ENCODE measurements at regions of chr20 and their contacts with region 1.

Region 1: DNA sequence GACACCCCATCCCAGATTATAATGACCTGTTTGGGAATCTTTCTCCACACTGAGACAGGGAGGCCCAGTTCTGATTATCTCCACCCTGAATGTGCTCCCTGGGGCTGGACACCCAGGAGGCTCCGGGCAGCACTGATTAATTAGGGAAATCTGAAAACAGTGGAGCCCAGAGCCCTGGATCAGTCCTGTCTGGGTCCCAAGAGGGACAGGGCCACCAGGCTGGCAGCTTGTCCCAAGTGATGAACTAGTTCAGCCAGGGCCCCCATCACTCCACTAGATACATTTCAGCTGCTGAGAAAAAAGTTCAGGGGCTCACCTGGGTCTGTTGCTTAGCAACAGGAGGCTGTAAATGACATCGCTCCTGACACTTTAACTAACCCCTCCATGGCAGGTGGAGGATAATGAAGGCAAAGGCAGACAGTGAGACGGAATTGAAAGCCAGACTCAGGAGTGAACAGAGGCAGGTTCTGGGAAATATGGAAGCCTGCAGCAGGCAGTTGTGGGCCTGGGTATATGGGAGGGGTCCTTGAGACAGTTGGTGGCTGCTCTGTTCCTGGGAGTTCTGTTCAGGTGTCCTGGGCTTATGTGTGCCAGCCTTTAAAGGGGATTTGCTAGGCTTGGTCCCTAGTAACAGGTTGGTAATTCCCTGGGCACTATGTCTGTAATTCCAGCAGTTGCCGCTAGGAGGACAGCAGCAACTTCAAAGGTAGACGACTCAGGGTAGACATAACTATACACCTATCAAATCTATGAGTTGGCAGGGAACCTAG is 78.3 kb upstream of the CTNNBL1 start:
- DNase-seq: no peak
- ATAC-seq: peak in 1 of 4 donors; percentile 36
- H3K4me3 ChIP-seq: no peak overlapping the region
- H3K27ac ChIP-seq: no peak overlapping the region
- H3K4me1 ChIP-seq: no peaks in the 10 kb centered on the region
- H3K27me3 ChIP-seq: peaks cover 0 to 15% (median 0%) of the 10 kb centered on the region in 9 donors
- CTCF ChIP-seq: peak in 10 of 12 donors; percentile 20 to 77 (median 60)
- POLR2A ChIP-seq: no peak

Region 2: DNA sequence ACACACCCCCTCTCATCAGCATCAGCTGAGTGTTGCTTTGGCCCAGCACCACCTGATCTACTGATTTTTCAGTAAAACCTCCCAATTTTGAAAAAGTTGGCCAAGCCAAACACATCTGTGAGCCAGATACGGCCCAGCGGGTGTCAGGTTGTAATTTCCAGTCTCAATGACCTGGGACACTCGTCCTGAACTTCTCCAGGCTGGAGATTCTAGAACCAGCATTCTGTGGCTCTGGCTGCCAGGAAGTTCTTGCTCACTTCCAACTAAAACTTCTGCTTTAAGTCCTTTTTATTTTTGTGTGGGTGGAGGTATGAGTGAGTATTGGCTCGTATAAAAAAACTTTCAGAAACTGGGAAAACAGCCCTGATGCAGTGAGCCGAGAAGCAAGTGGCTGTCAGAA is 639.9 kb after region 1 on chr20:
- intact Hi-C with region 1: loop called in 1 of 10 experiments (anchors 10 kb)
- DNase-seq: peak in 1 of 5 donors; percentile 49
- ATAC-seq: peak in 3 of 4 donors; percentile 48 to 64 (median 60)
- H3K4me3 ChIP-seq: peak overlapping the region in 1 of 12 donors; percentile 16
- H3K27ac ChIP-seq: peak overlapping the region in 7 of 12 donors; percentile 43 to 65 (median 57)
- H3K4me1 ChIP-seq: peaks cover 0 to 50% (median 4%) of the 10 kb centered on the region in 12 donors
- H3K27me3 ChIP-seq: peaks cover 0 to 13% (median 6%) of the 10 kb centered on the region in 9 donors
- CTCF ChIP-seq: no peak
- POLR2A ChIP-seq: no peak